ENCODE measurements at regions of chr11 and their contacts with region 1.

Region 1: GRCh38 chr11:62208785-62209144 is 292 bp downstream of the SCGB2A1 start:
- DNase-seq: no peak
- H3K4me3 ChIP-seq: no peak overlapping the region
- H3K27ac ChIP-seq: no peak overlapping the region
- H3K4me1 ChIP-seq: no peaks in the 10 kb centered on the region
- H3K27me3 ChIP-seq: no peaks in the 10 kb centered on the region
- CTCF ChIP-seq: no peak

Region 2: DNA sequence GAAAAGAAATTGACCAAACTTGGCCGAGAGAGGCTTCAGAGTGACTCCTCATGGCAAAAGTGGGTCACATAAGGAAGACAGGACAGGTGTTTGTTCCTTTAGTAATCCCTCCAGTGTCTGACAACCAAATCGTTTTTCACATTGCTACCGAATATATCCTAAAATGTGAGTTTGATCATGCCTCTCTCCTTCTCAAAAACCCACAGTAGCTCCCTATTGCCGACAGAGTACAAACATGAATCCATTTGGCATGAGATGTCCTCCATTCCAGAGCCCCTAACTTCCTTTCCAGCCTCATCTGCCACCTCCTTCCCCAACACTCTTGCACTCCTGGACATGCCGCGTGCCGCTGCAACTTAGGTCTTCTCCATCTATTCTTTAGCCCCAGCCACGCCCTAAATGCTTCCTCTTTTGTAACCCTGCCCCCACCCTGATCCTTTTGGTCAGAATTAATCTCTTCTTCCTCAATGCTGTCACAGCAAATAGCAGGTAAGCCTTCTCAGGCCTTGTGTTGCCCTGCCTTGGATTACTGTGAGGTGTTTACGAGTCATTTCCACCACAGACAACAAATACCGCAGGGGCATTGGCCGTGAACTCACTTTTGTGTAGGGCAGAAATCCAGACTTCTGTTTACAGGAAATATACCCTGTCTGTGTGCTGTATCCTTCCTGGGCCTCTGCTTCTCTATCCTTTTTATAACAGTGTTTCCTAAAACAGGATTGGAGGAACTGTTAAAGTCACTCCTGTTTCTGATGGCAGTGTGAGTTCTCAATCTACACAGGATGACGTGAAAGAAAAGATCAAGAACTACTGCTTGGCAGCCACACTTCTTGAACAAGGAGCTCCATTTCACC is 175.3 kb before region 1 on chr11:
- CTCF ChIA-PET with region 1: no interaction called
- dilution Hi-C with region 1: no loop called
- in situ Hi-C with region 1: no loop called
- intact Hi-C with region 1: no loop called
- DNase-seq: peak; percentile 80
- H3K4me3 ChIP-seq: no peak overlapping the region
- H3K27ac ChIP-seq: no peak overlapping the region
- H3K4me1 ChIP-seq: peaks cover 9% of the 10 kb centered on the region
- H3K27me3 ChIP-seq: no peaks in the 10 kb centered on the region
- CTCF ChIP-seq: no peak

Region 3: DNA sequence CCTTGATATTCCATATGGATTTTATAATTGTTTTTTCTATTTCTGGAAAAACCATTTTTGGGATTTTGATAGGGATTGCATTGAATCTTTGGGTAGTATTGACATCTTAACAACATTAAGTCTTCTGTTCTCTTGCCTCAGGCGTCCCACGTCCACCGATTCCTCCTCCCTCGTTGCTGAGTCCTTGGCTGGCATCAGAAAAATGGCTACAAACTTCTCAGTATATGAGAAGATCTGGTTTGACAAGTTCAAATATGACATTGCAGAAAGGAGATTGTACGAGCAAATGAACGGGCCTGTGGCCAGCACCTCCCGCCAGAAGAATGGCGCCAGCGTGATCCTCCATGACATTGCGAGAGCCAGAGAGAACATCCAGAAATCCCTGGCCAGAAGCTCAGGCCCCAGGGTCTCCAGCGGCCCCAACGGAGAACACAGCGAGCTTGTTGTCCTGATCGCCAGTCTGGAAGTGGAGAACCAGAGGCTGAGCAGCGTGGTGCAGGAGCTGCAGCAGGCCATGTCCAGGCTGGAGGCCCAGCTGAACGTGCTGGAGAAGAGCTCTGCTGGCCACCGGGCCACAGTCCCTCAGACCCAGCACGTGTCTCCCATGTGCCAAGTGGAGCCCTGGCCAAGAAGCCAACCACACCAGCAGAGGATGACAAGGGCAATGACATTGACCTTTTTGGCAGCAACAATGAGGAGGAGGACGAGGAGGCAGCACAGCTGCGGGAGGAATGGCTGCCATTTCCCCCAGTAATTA is 39.5 kb before region 1 on chr11:
- CTCF ChIA-PET with region 1: no interaction called
- dilution Hi-C with region 1: loop called (anchors 5 kb)
- in situ Hi-C with region 1: no loop called
- intact Hi-C with region 1: loop called (anchors 1 kb)
- DNase-seq: no peak
- H3K4me3 ChIP-seq: no peak overlapping the region
- H3K27ac ChIP-seq: no peak overlapping the region
- H3K4me1 ChIP-seq: no peaks in the 10 kb centered on the region
- H3K27me3 ChIP-seq: no peaks in the 10 kb centered on the region
- CTCF ChIP-seq: no peak

Region 4: GRCh38 chr11:62266558-62266957 is 57.8 kb after region 1 on chr11:
- CTCF ChIA-PET with region 1: no interaction called
- dilution Hi-C with region 1: no loop called
- in situ Hi-C with region 1: no loop called
- intact Hi-C with region 1: no loop called
- DNase-seq: no peak
- H3K4me3 ChIP-seq: no peak overlapping the region
- H3K27ac ChIP-seq: no peak overlapping the region
- H3K4me1 ChIP-seq: no peaks in the 10 kb centered on the region
- H3K27me3 ChIP-seq: no peaks in the 10 kb centered on the region
- CTCF ChIP-seq: no peak

Measured in mammary epithelial cell (primary cell).